Mammary epithelial cell (primary cell): ENCODE measurements at regions of chr4 and their contacts with region 1.

Region 1: GRCh38 chr4:126604268-126604867 is 1028.4 kb upstream of the INTU start:
- DNase-seq: peak; percentile 19
- H3K4me3 ChIP-seq: no peak overlapping the region
- H3K27ac ChIP-seq: no peak overlapping the region
- H3K4me1 ChIP-seq: no peaks in the 10 kb centered on the region
- H3K27me3 ChIP-seq: no peaks in the 10 kb centered on the region
- CTCF ChIP-seq: peak; percentile 79 to 83

Region 2: GRCh38 chr4:125741825-125742452 is 862.4 kb before region 1 on chr4:
- CTCF ChIA-PET with region 1: no interaction called
- dilution Hi-C with region 1: no loop called
- in situ Hi-C with region 1: no loop called
- intact Hi-C with region 1: loop called (anchors 10 kb)
- DNase-seq: peak; percentile 20
- H3K4me3 ChIP-seq: no peak overlapping the region
- H3K27ac ChIP-seq: no peak overlapping the region
- H3K4me1 ChIP-seq: no peaks in the 10 kb centered on the region
- H3K27me3 ChIP-seq: no peaks in the 10 kb centered on the region
- CTCF ChIP-seq: peak; percentile 63 to 82

Region 3: DNA sequence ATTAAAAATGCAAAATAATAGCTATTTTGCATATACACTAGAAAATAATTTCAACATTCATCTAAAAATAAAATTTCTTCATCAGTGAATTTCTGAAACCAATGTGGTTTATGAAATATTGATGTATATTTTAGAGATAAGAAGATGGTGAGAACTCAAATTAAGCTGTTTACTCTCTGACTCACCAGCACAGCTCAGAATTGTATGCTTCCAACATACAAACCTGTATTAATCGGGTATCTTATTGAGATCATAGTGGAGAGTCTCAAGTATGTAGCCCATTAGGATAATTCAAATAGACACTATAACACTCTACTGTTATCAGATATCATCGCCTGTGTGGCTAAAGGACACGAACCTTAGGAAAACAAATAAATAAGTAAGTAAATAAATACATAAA is 128.9 kb after region 1 on chr4:
- CTCF ChIA-PET with region 1: no interaction called
- dilution Hi-C with region 1: no loop called
- in situ Hi-C with region 1: no loop called
- intact Hi-C with region 1: no loop called
- DNase-seq: no peak
- H3K4me3 ChIP-seq: no peak overlapping the region
- H3K27ac ChIP-seq: no peak overlapping the region
- H3K4me1 ChIP-seq: no peaks in the 10 kb centered on the region
- H3K27me3 ChIP-seq: no peaks in the 10 kb centered on the region
- CTCF ChIP-seq: no peak